ENCODE measurements at regions of chr12 and their contacts with region 1.

Region 1: GRCh38 chr12:69570545-69571399 is 14.5 kb upstream of the CCT2 start:
- DNase-seq: peak; percentile 49
- H3K4me3 ChIP-seq: no peak overlapping the region
- H3K27ac ChIP-seq: peak overlapping the region in 1 of 2 experiments; percentile 72; a peak in 1 of 4 replicates
- H3K4me1 ChIP-seq: peaks cover 0 to 8% of the 10 kb centered on the region in 2 experiments; a peak in 3 of 4 replicates
- H3K27me3 ChIP-seq: no peaks in the 10 kb centered on the region
- CTCF ChIP-seq: peak; percentile 89
- EP300 ChIP-seq: no peak
- RAD21 ChIP-seq: peak; percentile 78

Region 2: DNA sequence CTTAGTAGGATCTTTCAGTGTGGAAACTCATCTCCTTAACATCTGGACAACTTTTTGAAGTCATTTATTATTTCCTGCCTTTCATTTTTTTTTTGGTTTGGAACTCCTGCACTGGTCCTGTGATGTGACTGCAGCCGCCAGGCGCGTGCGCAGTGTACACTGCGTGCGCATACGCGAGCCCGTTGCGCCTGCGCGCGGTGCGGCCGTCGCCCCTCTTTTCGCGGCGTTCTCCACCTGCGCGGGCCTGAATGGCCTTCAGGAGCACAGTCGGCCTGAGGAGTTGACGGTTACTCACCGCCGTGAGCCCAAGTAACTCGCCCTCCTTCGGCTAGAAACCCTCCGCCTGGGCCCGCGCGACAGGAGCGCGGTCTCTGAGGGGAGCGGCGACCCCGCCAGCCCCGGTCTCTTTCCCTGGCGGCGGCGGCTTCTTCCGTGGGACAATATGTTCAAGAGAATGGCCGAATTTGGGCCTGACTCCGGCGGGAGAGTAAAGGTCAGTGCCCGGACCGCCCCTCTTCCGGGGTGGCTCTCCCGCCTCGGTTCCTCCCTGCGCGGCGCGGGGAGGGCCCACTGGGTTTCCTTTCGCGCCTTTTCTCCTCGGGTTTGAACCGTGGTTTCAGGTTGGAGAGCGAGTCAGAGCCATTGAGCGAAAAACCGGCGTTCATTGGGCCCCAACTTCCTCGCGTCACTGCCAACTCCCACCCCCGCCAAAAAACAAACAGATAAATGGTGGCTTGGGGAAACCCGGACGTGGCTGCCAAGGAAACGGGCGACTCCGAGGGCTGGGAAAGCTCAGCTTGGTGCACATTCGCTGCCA is 211.0 kb before region 1 on chr12 and contains the start of gene YEATS4:
- CTCF ChIA-PET with region 1: interaction called, 26 read pairs
- POLR2A ChIA-PET with region 1: no interaction called
- DNase-seq: peak; percentile 92
- H3K4me3 ChIP-seq: peak within 1 kb of the TSS; percentile 83 to 90
- H3K27ac ChIP-seq: peak within 1 kb of the TSS; percentile 93
- H3K4me1 ChIP-seq: peaks cover 4 to 6% of the 10 kb centered on the region in 2 experiments; a peak in 3 of 4 replicates
- H3K27me3 ChIP-seq: no peaks in the 10 kb centered on the region
- CTCF ChIP-seq: no peak
- EP300 ChIP-seq: no peak
- RAD21 ChIP-seq: no peak
- polyA plus RNA-seq, gene YEATS4: 11.4 and 13.2 TPM in 2 replicates

Region 3: DNA sequence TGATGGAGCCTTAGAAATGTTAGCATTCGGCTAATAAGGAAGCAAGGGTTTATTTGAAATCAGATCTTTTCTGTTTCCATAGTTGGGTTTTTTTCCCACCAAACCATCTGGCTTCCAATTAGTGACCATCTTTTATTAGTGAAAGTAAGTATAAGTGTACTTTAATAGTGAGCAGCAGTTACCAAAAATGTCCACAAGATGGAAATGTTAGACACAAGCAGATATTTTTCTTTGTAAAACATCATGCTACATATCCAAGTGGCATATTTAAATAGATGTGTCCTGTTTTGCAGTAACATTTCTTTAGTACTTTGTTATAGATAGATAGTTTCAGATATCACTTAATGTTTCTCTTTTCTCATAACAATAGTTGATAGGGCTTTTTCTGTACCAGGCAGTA is 182.4 kb before region 1 on chr12:
- CTCF ChIA-PET with region 1: interaction called, 32 read pairs
- POLR2A ChIA-PET with region 1: no interaction called
- DNase-seq: peak; percentile 30
- H3K4me3 ChIP-seq: no peak overlapping the region
- H3K27ac ChIP-seq: peak overlapping the region in 1 of 2 experiments; percentile 10; a peak in 1 of 4 replicates
- H3K4me1 ChIP-seq: peaks cover 0 to 6% of the 10 kb centered on the region in 2 experiments; a peak in 1 of 4 replicates
- H3K27me3 ChIP-seq: no peaks in the 10 kb centered on the region
- CTCF ChIP-seq: peak; percentile 88
- EP300 ChIP-seq: no peak
- RAD21 ChIP-seq: peak; percentile 75

Region 4: GRCh38 chr12:69428351-69429065 is 142.3 kb before region 1 on chr12:
- CTCF ChIA-PET with region 1: interaction called, 10 read pairs
- POLR2A ChIA-PET with region 1: no interaction called
- DNase-seq: no peak
- H3K4me3 ChIP-seq: no peak overlapping the region
- H3K27ac ChIP-seq: no peak overlapping the region
- H3K4me1 ChIP-seq: no peaks in the 10 kb centered on the region
- H3K27me3 ChIP-seq: no peaks in the 10 kb centered on the region
- CTCF ChIP-seq: no peak
- EP300 ChIP-seq: no peak
- RAD21 ChIP-seq: no peak

Region 5: DNA sequence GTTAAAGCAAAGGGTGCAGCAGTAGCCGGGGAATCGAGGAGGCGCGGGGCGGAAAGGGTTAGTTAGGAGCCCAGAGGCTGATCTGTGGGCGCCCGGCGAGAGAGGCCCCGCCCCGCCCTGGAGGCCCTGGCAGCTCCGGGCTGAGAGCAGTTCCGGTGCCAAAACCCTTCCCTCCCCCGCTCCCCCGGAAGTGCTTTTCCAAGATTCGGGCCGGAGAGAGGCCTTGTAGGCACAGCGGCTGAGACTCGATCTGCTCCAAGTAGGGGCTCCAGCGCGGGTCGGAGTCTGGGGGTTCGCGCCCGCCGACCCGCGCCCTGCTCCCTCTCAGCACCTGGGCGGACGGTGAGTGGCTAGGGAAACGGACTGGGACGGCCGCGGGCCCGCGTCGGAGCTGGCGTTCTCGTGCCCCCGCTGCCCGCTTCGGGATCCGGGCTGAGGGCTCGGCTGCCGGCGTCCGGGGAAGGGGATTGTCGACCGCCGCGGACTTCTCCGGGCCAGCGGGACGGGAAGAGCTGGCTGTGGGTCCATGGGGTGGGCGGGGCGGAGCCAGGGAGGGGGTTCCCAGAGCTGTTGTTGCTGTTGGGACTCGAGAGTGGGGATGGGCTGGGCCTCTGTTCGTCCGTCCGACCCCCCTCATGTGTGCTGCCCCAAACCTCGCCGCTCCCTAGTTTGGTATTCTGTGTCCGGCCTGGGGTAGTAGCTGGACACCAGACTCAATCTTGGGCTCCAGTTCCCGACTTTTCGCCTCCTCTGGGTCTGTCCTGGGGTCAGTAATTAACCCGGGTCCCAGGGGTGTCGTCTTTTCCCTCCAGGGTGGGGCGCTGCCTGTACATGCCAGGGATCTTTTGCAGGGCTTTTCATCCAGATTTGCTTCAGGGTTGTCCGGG is 100.3 kb before region 1 on chr12 and contains the start of gene FRS2:
- CTCF ChIA-PET with region 1: interaction called, 19 read pairs
- POLR2A ChIA-PET with region 1: no interaction called
- DNase-seq: peak; percentile 97
- H3K4me3 ChIP-seq: peak within 1 kb of the TSS; percentile 74 to 95
- H3K27ac ChIP-seq: peak within 1 kb of the TSS; percentile 92 to 93
- H3K4me1 ChIP-seq: peaks cover 14 to 20% of the 10 kb centered on the region in 2 experiments; a peak in 3 of 4 replicates
- H3K27me3 ChIP-seq: no peaks in the 10 kb centered on the region
- CTCF ChIP-seq: peak; percentile 64
- EP300 ChIP-seq: no peak
- RAD21 ChIP-seq: peak; percentile 64
- polyA plus RNA-seq, gene FRS2: 7.1 and 9.6 TPM in 2 replicates

Region 6: GRCh38 chr12:69553627-69554248 is 17.0 kb before region 1 on chr12:
- CTCF ChIA-PET with region 1: interaction called, 66 read pairs
- POLR2A ChIA-PET with region 1: no interaction called
- DNase-seq: peak; percentile 39
- H3K4me3 ChIP-seq: no peak overlapping the region
- H3K27ac ChIP-seq: peak overlapping the region; percentile 23 to 70; a peak in 3 of 4 replicates
- H3K4me1 ChIP-seq: peaks cover 0 to 7% of the 10 kb centered on the region in 2 experiments; a peak in 2 of 4 replicates
- H3K27me3 ChIP-seq: no peaks in the 10 kb centered on the region
- CTCF ChIP-seq: no peak
- EP300 ChIP-seq: no peak
- RAD21 ChIP-seq: no peak

Region 7: GRCh38 chr12:69585189-69586062 is 14.7 kb after region 1 on chr12 and contains the start of gene CCT2:
- CTCF ChIA-PET with region 1: interaction called, 27 read pairs
- POLR2A ChIA-PET with region 1: no interaction called
- DNase-seq: peak; percentile 95
- H3K4me3 ChIP-seq: peak within 1 kb of the TSS; percentile 88 to 99
- H3K27ac ChIP-seq: peak within 1 kb of the TSS; percentile 86 to 96
- H3K4me1 ChIP-seq: peaks cover 5 to 6% of the 10 kb centered on the region in 2 experiments; a peak in 3 of 4 replicates
- H3K27me3 ChIP-seq: no peaks in the 10 kb centered on the region
- CTCF ChIP-seq: peak; percentile 45
- EP300 ChIP-seq: no peak
- RAD21 ChIP-seq: peak; percentile 36
- polyA plus RNA-seq, gene CCT2: 181 and 242 TPM in 2 replicates

Measured in SK-N-SH (cell line).